ENCODE measurements at regions of chr2 and their contacts with region 1.

Region 1: GRCh38 chr2:181112916-181113315 is 132.5 kb downstream of the UBE2E3 start:
- DNase-seq: no peak
- H3K4me3 ChIP-seq: no peak overlapping the region
- H3K27ac ChIP-seq: no peak overlapping the region
- H3K4me1 ChIP-seq: no peaks in the 10 kb centered on the region
- H3K27me3 ChIP-seq: no peaks in the 10 kb centered on the region
- CTCF ChIP-seq: no peak

Region 2: DNA sequence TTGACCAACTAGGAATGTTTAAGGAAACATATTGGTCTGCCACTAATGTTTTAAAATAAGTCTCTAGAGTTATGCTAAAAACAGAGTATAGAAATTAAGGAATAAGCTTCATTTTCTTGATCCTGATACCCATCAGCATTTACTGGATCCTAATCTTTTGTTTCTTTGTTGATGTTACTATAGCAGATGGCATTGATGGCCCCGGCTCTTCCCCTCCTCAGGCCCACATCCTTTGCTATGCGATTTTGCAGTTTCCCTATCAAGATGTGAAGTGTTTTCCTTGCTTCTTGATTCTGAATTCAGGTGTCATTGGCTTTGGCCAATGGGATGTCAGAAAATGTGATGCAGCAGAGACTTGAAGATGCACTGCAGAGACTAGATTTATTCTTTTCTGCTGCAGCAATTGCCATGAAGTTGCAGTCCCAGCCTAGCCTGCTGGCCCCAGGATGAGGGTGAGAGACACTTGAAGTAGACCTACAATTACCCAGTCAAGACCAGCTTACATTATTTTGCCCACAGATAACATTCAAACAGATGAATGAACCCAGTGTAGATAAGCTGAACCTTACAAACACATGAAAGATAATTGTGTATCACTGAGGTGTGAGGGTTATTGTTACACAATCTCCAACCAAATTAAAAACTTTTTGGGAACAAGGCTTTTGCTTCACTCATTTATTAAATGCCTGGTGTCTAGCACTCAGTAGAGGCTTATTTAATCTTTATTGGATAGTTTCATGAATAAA is 229.1 kb after region 1 on chr2:
- CTCF ChIA-PET with region 1: no interaction called
- POLR2A ChIA-PET with region 1: interaction called, 11 read pairs
- intact Hi-C with region 1: no loop called
- DNase-seq: no peak
- H3K4me3 ChIP-seq: no peak overlapping the region
- H3K27ac ChIP-seq: no peak overlapping the region
- H3K4me1 ChIP-seq: no peaks in the 10 kb centered on the region
- H3K27me3 ChIP-seq: no peaks in the 10 kb centered on the region
- CTCF ChIP-seq: no peak